Caki2 (cell line): ENCODE measurements at regions of chr3 and their contacts with region 1.

Region 1: GRCh38 chr3:191412759-191413158 is 48.2 kb upstream of the PYDC2 start:
- DNase-seq: no peak

Region 2: DNA sequence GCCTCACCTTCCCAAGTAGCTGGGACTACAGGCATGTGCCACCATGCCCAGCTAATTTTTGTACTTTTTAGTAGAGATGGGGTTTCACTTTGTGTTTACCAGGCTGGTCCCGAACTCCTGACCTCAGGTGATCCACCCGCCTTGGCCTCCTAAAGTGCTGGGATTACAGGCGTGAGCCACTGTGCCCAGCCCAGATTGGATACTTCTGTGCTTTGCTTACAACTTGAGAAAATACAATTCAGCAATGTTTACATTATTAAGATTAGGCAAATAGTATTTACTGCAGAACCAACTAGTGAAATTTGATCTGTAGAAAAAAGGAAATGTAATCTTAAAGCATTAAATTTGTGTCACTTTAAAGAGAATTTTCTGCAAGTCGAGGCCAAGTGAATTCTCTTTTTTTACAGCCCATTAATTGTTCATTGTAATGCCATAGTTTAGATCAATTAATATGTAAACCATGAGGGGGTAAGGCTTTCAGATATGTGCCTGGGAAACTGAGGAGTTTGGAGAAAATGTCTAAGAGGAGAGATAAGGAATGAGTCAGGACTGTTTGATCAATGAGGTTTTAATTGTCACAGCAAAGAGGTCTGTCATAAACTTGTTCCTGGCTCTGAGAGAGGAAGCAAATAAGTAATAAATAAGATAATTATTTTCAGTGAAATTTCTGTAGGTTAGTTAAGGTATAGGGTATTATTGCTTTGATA is 63.5 kb after region 1 on chr3:
- in situ Hi-C with region 1: no loop called
- DNase-seq: peak; percentile 44

Region 3: GRCh38 chr3:191762323-191762960 is 349.7 kb after region 1 on chr3:
- in situ Hi-C with region 1: no loop called
- DNase-seq: peak; percentile 21

Region 4: GRCh38 chr3:192444096-192444790 is 1031.5 kb after region 1 on chr3:
- in situ Hi-C with region 1: loop called (anchors 25 kb)
- DNase-seq: peak; percentile 58